Caco-2 (cell line): ENCODE measurements at regions of chr22 and their contacts with region 1.

Region 1: GRCh38 chr22:19730655-19731360 is 7.5 kb downstream of the GP1BB start:
- DNase-seq: peak; percentile 83 to 90
- H3K4me3 ChIP-seq: peak overlapping the region; percentile 52
- H3K4me3 Mint-ChIP-seq: peak overlapping the region; percentile 79
- H3K27ac Mint-ChIP-seq: no peak overlapping the region
- H3K4me1 ChIP-seq: peaks cover 13% of the 10 kb centered on the region
- H3K4me1 Mint-ChIP-seq: no peaks in the 10 kb centered on the region
- H3K27me3 ChIP-seq: no peaks in the 10 kb centered on the region
- H3K27me3 Mint-ChIP-seq: peaks cover 11% of the 10 kb centered on the region
- CTCF ChIP-seq: peak; percentile 89 to 93

Region 2: DNA sequence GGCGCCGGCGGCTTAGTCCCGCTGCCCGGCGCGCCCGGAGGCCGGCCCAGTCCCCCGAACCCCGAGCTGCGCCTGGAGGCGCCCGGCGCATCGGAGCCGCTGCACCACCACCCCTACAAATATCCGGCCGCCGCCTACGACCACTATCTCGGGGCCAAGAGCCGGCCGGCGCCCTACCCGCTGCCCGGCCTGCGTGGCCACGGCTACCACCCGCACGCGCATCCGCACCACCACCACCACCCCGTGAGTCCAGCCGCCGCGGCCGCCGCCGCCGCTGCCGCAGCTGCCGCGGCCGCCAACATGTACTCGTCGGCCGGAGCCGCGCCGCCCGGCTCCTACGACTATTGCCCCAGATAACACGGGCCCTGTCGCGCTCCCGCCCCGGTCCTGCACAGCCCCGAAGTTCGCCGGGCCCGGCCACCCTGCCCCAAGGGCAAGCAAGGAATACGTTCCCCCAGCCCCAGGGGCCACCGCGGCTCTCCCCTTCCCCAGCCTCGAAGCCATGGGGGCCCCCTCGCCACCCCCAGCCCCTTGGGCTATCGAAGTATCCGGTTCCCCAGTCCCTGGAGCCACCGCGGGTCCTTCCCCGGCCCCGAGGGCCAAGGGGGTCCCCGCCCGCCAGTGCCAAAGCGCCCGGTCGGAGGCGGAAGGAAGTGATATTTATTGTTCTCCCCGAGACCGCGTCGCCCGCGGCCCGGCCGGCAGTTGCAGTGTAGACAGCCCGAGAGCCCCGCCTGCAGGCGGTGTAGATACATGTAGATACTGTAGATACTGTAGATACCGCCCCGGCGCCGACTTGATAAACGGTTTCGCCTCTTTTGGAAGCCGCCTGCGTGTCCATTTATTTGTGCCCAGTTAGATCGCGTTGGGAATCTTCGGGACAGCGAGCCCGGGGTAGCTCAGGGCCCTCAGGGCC is 36.0 kb after region 1 on chr22:
- CTCF ChIA-PET with region 1: interaction called, 5 read pairs
- POLR2A ChIA-PET with region 1: no interaction called
- intact Hi-C with region 1: loop called (anchors 1 kb)
- DNase-seq: peak; percentile 60 to 73
- H3K4me3 ChIP-seq: peak overlapping the region; percentile 36
- H3K4me3 Mint-ChIP-seq: peak overlapping the region; percentile 61
- H3K27ac Mint-ChIP-seq: no peak overlapping the region
- H3K4me1 ChIP-seq: peaks cover 12% of the 10 kb centered on the region
- H3K4me1 Mint-ChIP-seq: no peaks in the 10 kb centered on the region
- H3K27me3 ChIP-seq: no peaks in the 10 kb centered on the region
- H3K27me3 Mint-ChIP-seq: peaks cover under 1% of the 10 kb centered on the region
- CTCF ChIP-seq: peak; percentile 36 to 48

Region 3: DNA sequence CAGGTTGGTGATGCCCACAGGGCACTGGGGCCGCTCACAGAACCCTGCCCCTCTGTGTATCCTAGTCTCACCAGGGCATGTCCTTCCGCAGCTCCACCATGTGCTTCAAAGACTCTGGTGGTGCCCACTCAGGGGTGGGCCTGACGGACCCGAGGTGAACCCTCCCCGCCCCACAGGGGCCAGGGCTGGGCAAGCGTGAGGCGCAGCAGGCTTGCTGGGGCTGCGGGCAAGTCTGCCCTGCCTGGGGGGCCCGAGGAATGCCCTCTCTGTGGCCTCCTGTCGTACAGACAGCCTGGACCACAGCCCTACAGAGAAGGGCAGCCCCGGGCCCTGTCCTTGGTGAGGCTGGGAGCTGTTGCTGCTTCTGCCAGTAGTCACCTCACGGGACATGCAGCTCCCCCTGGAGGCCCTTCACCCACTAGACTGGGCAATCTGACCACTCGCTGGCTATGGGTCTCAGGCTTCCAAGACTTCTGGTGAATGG is 70.0 kb after region 1 on chr22:
- CTCF ChIA-PET with region 1: interaction called, 14 read pairs
- POLR2A ChIA-PET with region 1: no interaction called
- intact Hi-C with region 1: no loop called
- DNase-seq: peak in 1 of 2 experiments; percentile 49
- H3K4me3 ChIP-seq: no peak overlapping the region
- H3K4me3 Mint-ChIP-seq: no peak overlapping the region
- H3K27ac Mint-ChIP-seq: no peak overlapping the region
- H3K4me1 ChIP-seq: no peaks in the 10 kb centered on the region
- H3K4me1 Mint-ChIP-seq: no peaks in the 10 kb centered on the region
- H3K27me3 ChIP-seq: no peaks in the 10 kb centered on the region
- H3K27me3 Mint-ChIP-seq: no peaks in the 10 kb centered on the region
- CTCF ChIP-seq: peak; percentile 22 to 59

Region 4: DNA sequence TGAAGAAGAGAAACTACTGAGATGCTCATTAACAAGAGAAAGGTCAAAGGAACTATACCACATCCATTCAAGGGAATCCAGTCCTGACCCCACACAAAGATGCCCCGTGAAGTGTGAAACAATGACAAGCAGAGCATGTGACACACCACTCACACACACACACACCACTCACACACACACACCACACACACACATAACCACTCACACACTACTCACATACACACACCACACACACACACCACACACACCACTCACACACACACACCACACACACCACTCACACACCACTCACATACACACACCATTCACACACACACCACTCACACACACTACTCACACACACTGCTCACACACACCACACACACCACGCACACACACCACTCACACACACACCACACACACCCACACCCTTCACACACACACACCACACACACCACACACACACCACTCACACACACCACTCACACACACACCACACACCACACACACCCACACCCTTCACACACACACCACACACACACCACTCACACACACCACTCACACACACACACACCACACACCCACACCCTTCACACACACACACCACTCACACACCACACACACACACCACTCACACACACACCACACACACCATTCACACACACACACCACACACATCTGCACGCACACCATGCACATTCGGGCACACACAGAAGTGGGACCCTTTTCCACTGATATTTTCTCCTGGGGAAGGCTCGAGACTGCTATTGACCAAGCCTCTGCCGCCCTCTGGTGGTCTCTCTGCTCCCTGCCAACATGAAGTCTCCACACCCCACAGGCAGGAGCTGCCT is 178.8 kb after region 1 on chr22:
- CTCF ChIA-PET with region 1: interaction called, 33 read pairs
- POLR2A ChIA-PET with region 1: no interaction called
- intact Hi-C with region 1: loop called (anchors 1 kb)
- DNase-seq: peak; percentile 80 to 83
- H3K4me3 ChIP-seq: no peak overlapping the region
- H3K4me3 Mint-ChIP-seq: no peak overlapping the region
- H3K27ac Mint-ChIP-seq: peak overlapping the region; percentile 15
- H3K4me1 ChIP-seq: no peaks in the 10 kb centered on the region
- H3K4me1 Mint-ChIP-seq: peaks cover 7% of the 10 kb centered on the region
- H3K27me3 ChIP-seq: no peaks in the 10 kb centered on the region
- H3K27me3 Mint-ChIP-seq: no peaks in the 10 kb centered on the region
- CTCF ChIP-seq: peak; percentile 75 to 95